Ovary (tissue), 10 donors: ENCODE measurements at regions of chr12 and their contacts with region 1.

Region 1: GRCh38 chr12:48851883-48852733 is at the start of gene DDX23:
- DNase-seq: peak; percentile 90 to 94 (median 90)
- H3K4me3 ChIP-seq: peak within 1 kb of the TSS; percentile 90
- H3K27ac ChIP-seq: peak within 1 kb of the TSS; percentile 28 to 73
- H3K4me1 ChIP-seq: peaks cover 5% of the 10 kb centered on the region
- H3K27me3 ChIP-seq: no peaks in the 10 kb centered on the region
- CTCF ChIP-seq: no peak
- EP300 ChIP-seq: peak; percentile 94
- POLR2A ChIP-seq: peak; percentile 66
- total RNA-seq, gene DDX23: 48.0 to 82.2 (median 70.5) TPM

Region 2: GRCh38 chr12:48796976-48797375 is 55.1 kb before region 1 on chr12:
- intact Hi-C with region 1: no loop called
- DNase-seq: no peak
- H3K4me3 ChIP-seq: no peak overlapping the region
- H3K27ac ChIP-seq: no peak overlapping the region
- H3K4me1 ChIP-seq: no peaks in the 10 kb centered on the region
- H3K27me3 ChIP-seq: no peaks in the 10 kb centered on the region
- CTCF ChIP-seq: no peak
- EP300 ChIP-seq: no peak
- POLR2A ChIP-seq: no peak

Region 3: DNA sequence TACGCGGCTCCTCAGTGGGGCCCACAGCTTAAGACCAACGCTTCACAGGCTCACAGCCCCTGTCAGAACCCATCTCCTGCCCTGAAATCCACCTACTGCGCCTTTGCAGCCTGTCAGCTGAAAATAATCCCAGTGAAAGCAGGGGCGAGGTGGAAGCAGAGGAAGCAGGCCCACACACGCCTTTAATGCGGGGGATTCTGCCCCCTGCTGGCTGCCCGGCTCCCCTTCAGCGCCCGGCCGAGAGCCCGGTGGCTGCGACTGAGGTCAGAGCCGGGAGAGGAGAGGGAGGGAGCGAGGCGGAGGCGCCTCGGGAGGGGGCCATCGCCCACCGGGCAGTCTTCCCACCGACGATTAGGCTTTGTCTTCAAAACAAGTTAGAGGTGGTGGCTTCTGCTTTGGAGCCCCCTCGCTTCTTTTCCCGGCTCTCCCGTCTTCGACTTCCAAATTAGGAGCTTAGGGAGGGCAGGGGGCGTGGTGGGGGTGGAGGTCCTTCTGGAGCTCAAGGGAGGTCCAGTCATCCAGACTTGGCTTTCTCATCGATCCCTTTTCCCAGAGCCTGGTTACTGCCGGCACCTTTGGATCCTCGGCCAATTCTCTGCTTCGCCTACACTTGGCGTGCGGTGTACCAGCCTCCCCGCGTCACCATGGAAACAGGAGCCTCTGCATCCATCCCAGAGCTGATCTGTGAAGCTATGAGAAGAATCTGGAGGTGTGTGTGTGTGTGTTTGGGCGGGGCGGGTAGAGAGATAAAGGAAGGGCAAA is 38.7 kb after region 1 on chr12:
- intact Hi-C with region 1: loop called in 3 of 4 experiments (anchors 2 to 5 kb)
- DNase-seq: peak; percentile 60 to 85 (median 78)
- H3K4me3 ChIP-seq: peak overlapping the region; percentile 22
- H3K27ac ChIP-seq: no peak overlapping the region
- H3K4me1 ChIP-seq: peaks cover 4% of the 10 kb centered on the region
- H3K27me3 ChIP-seq: no peaks in the 10 kb centered on the region
- CTCF ChIP-seq: peak; percentile 77 to 83 (median 78)
- EP300 ChIP-seq: no peak
- POLR2A ChIP-seq: no peak

Region 4: GRCh38 chr12:48936379-48936979 is 84.4 kb after region 1 on chr12:
- intact Hi-C with region 1: loop called in 2 of 4 experiments (anchors 5 kb)
- DNase-seq: peak; percentile 58 to 82 (median 76)
- H3K4me3 ChIP-seq: no peak overlapping the region
- H3K27ac ChIP-seq: no peak overlapping the region
- H3K4me1 ChIP-seq: no peaks in the 10 kb centered on the region
- H3K27me3 ChIP-seq: no peaks in the 10 kb centered on the region
- CTCF ChIP-seq: peak; percentile 40 to 78 (median 66)
- EP300 ChIP-seq: no peak
- POLR2A ChIP-seq: no peak

Region 5: DNA sequence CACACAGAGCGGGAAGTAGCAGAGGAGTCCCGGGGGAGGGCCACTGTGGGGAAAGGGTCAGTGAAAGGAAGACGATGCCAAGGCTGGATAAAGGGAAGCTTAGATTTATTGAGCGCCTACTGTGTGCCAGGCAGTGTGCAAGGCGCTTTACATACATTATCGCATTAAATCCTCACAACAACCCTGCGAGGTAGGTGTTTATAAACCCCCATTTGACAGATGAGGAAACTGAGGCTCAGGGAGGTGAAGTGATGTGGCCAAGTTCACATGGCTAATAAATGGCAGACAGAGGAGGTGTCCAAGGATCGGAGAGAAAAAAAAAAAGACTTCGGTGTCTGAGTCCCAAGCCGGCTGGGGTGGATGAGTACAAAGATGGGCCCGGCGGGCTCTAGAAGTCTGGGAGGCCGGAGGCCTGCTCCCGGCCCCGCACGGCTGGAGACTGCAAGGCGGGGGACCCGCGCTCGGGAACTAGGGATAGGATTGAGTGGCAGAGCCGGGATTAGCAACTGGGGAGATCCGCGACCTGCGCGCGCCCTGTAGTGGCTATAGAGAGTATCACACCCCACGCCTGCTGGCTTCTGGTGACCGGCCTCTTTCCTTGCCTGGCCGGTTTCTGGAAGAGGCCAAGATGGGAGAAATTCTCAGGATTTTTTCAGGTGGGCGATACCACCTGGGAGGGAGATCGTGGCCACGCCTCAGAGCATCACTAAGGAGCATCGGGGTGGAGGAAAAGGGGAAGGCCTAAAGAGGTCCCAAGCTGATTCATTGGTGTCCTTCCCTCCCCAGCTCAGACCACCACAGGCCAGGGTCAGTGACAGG is 143.2 kb after region 1 on chr12:
- intact Hi-C with region 1: loop called in 1 of 4 experiments (anchors 5 kb)
- DNase-seq: peak; percentile 62 to 85 (median 74)
- H3K4me3 ChIP-seq: no peak overlapping the region
- H3K27ac ChIP-seq: no peak overlapping the region
- H3K4me1 ChIP-seq: peaks cover 6% of the 10 kb centered on the region
- H3K27me3 ChIP-seq: no peaks in the 10 kb centered on the region
- CTCF ChIP-seq: peak; percentile 63 to 66 (median 64)
- EP300 ChIP-seq: no peak
- POLR2A ChIP-seq: no peak